HepG2 (cell line): ENCODE measurements at regions of chr10 and their contacts with region 1.

Region 1: DNA sequence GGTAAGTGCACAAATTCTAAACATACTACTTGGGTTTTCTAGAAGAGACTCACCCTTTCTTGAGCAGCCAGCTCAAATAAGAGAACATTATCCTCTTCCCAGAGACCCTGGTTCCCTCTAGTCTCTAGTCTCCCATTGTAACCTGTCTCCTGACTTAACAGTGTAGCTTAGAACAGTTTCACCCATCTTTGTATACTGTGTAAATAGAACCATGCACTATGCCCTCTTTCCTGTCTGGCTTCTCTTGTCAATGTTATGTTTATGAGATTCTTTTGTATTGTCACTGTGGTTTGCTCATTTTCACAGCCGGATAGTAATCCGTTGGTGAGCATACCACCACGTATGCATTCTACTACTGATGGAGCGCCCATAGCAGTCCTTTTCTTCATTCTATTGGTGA is 227.4 kb upstream of the PLPP4 start:
- DNase-seq: peak; percentile 11
- ATAC-seq: peak; percentile 75
- H3K4me3 ChIP-seq: no peak overlapping the region
- H3K27ac ChIP-seq: no peak overlapping the region
- H3K4me1 ChIP-seq: peaks cover 10% of the 10 kb centered on the region
- H3K27me3 ChIP-seq: no peaks in the 10 kb centered on the region
- CTCF ChIP-seq: no peak
- EP300 ChIP-seq: no peak
- POLR2A ChIP-seq: no peak
- RAD21 ChIP-seq: no peak

Region 2: GRCh38 chr10:120172356-120172755 is 57.3 kb before region 1 on chr10:
- CTCF ChIA-PET with region 1: no interaction called
- POLR2A ChIA-PET with region 1: no interaction called
- in situ Hi-C with region 1: no loop called
- intact Hi-C with region 1: no loop called
- DNase-seq: no peak
- ATAC-seq: no peak
- H3K4me3 ChIP-seq: no peak overlapping the region
- H3K27ac ChIP-seq: no peak overlapping the region
- H3K4me1 ChIP-seq: no peaks in the 10 kb centered on the region
- H3K27me3 ChIP-seq: peaks cover 0 to 15% of the 10 kb centered on the region in 2 experiments; a peak in 2 of 5 replicates
- CTCF ChIP-seq: no peak
- EP300 ChIP-seq: no peak
- POLR2A ChIP-seq: no peak
- RAD21 ChIP-seq: no peak

Region 3: GRCh38 chr10:120336911-120337540 is 107.4 kb after region 1 on chr10:
- CTCF ChIA-PET with region 1: no interaction called
- POLR2A ChIA-PET with region 1: no interaction called
- in situ Hi-C with region 1: loop called (anchors 5 kb)
- intact Hi-C with region 1: no loop called
- DNase-seq: peak; percentile 33
- ATAC-seq: peak; percentile 34; the same call in 1 of the 3 replicates
- H3K4me3 ChIP-seq: no peak overlapping the region
- H3K27ac ChIP-seq: no peak overlapping the region
- H3K4me1 ChIP-seq: no peaks in the 10 kb centered on the region
- H3K27me3 ChIP-seq: peaks cover 0 to 7% of the 10 kb centered on the region in 2 experiments; a peak in 1 of 5 replicates
- CTCF ChIP-seq: peak; percentile 72
- EP300 ChIP-seq: no peak
- POLR2A ChIP-seq: no peak
- RAD21 ChIP-seq: no peak